Aorta (tissue), 5 donors: ENCODE measurements at regions of chr4 and their contacts with region 1.

Region 1: DNA sequence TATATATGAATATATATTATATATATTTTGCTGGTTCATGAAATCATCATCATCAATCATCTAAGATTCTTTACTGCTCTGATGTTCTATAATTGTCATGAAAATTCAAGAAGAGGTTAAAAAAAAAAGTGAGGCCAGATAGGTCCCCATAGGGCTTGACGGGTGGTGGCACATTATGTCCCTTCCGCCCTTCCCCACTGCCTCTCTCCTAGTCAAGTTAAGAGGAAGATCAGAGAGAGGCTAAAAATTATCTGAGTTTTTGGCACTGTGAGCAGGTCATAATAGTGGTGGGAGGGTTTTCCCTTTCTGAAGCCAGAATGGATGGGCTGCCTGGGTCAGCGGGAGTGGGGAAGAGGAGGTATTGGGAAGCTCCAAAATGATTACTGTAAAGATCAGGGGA is 5.4 kb downstream of the SYNPO2 start:
- DNase-seq: no peak
- ATAC-seq: no peak
- H3K4me3 ChIP-seq: peak overlapping the region; percentile 6 to 53
- H3K27ac ChIP-seq: peak overlapping the region; percentile 28 to 93
- H3K4me1 ChIP-seq: peaks cover 0 to 2% of the 10 kb centered on the region in 2 donors
- H3K27me3 ChIP-seq: no peaks in the 10 kb centered on the region

Region 2: DNA sequence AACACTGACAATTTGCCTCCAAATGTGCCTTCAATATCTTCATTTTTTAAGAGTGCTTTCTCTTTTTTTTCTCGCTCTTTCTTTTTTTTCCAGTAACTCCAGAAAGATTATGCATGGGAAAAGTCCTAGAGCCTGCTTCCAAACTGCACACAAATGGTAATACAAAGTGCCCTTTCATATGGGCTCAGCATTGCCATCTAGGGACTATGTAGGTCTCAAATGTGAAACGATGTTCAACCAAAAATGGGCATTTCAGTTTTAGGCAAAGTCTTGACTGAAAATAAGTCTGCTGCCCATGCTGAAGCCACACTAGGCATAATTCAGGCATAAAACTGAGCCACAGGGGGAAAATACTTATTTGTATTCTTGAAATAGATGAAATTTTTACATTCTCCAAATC is 60.2 kb after region 1 on chr4:
- intact Hi-C with region 1: loop called in 1 of 2 experiments (anchors 5 kb)
- DNase-seq: no peak
- ATAC-seq: no peak
- H3K4me3 ChIP-seq: no peak overlapping the region
- H3K27ac ChIP-seq: no peak overlapping the region
- H3K4me1 ChIP-seq: peaks cover 4 to 5% of the 10 kb centered on the region in 2 donors
- H3K27me3 ChIP-seq: no peaks in the 10 kb centered on the region